HAP-1 (cell line): ENCODE measurements at regions of chr13 and their contacts with region 1.

Region 1: DNA sequence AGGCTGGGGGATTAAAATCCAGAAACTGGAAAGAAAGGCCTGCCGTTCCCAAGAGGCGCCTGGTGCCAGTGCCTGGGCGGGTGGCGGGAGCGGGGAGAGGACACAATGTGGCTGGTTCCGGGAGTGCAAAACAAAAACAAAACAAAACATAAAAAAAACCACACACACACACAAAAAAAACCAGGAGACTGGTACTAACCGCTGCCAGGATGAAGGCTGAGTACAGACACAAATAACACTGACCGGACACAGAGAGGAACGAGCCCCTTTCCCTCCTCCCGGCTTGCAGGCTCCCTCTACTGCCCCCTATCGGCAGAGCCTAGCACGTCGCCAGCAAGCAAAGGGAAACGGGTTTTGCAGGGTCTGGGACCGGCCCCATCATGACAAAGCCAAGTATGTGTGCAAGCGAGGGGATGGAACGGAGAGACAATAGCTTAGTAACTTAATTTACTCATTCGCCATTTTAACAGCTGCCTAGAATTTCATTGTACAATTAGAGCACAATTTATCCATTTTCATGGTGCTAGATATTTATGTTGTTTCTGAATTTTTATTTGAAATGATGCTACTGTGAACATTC is 17.9 kb upstream of the ZDHHC20 start:
- DNase-seq: peak; percentile 74 to 93
- H3K4me3 ChIP-seq: peak overlapping the region; percentile 30
- H3K4me1 ChIP-seq: peaks cover 3% of the 10 kb centered on the region
- H3K27me3 ChIP-seq: no peaks in the 10 kb centered on the region

Region 2: DNA sequence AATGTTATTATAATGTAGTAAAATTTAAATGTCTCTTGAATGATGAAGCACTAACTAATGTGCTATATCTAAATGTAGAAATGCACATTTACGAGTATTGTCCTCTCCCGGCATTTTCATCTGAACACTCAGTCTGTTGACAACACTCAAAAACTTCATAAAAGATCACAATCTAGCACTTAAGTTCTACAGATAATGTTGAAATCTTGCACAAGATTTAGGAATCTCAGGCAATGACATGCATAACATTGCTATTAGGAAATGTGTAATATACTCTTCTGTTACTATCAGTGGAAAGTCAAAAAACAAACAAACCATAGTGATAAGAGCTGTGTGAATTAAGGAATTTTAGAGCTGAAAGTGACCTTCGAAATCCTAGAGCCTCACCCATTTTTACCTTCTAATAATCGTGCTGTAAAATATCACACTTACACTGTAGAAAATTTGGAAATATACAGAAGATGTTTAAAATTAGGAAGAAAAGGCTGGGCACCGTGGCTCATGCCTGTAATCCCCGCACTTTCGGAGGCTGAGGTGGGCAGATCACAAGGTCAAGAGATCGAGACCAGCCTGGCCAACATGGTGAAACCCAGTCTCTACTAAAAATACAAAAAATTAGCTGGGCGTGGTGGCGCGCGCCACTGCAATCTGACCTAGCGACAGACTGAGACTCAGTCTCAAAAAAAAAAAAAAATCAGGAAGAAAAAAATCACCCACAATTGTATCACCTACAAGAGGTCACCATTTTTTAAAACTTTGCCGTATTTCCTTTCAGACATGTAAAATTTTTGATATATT is 536.7 kb before region 1 on chr13:
- in situ Hi-C with region 1: loop called (anchors 5 kb)
- DNase-seq: no peak
- H3K4me3 ChIP-seq: no peak overlapping the region
- H3K4me1 ChIP-seq: no peaks in the 10 kb centered on the region
- H3K27me3 ChIP-seq: no peaks in the 10 kb centered on the region

Region 3: GRCh38 chr13:21124852-21125251 is 352.1 kb before region 1 on chr13:
- in situ Hi-C with region 1: loop called (anchors 25 kb)
- DNase-seq: peak in 1 of 2 experiments; percentile 68
- H3K4me3 ChIP-seq: no peak overlapping the region
- H3K4me1 ChIP-seq: no peaks in the 10 kb centered on the region
- H3K27me3 ChIP-seq: no peaks in the 10 kb centered on the region

Region 4: DNA sequence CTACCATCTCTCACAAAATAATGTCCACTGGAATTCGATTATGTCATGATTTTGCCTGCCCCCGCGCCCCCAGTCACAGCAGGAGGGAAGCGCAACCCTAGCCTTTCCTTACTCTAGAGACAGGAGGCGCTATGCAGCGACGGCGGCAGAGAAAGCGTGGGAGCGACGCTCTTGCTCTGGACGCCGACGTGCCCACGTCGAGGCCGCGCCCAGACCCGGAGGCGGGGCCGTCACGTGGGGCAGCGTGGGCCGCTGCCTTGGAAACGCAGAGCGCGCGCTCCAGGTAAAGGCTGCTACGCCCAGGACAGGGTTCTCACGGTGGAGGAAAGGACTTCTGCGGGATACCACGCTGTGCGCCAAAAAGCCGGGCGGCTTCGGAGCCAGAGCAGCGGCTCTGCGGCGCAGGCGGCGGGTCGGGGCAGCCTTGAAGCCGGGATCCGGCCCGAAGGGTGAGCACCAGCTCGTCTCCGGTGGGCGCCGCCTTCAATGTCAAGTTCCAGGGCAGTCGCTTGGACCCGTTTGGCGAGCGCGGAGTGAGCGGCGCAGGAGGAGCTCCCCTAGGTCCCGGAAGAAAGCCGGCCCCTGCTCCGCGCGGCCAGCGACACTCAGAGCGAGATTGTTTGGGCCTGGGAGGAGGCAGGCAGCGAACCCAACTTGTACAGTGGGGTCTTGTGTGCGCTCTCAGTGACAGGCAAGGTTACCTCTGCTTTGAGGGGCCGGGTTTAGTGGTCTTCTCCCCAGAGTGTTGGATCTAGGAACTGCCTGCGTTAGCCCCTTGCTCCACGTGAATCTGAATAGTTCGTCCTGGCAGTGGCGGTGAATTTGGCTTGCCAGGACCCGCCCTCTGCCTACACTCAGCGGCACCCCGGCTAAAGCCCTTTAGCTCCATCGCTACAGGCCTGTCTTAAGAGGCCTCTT is 178.8 kb before region 1 on chr13:
- in situ Hi-C with region 1: loop called (anchors 5 kb)
- DNase-seq: peak; percentile 86 to 89
- H3K4me3 ChIP-seq: peak overlapping the region; percentile 78
- H3K4me1 ChIP-seq: peaks cover 8% of the 10 kb centered on the region
- H3K27me3 ChIP-seq: no peaks in the 10 kb centered on the region